ENCODE measurements at regions of chr9 and their contacts with region 1.

Region 1: DNA sequence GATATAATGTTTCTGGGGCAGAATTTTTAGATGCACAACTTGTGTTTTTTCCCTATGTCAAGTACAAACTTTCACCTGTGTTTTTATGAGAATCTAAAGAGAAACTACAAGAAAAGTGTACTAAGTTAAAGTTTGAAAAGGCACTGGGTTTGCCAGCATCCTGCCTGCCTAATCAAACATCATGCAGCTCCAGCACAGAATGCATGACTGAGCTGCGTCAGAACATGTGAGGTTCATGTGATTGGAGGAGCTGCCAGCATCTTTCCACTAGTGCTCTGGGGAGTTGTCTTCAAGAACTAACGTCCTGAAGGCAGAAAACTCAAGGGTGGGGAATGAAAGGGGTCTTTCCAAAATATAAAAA is 46.1 kb upstream of the RIC1 start:
- DNase-seq: peak; percentile 66
- H3K4me3 Mint-ChIP-seq: no peak overlapping the region
- H3K27ac Mint-ChIP-seq: peak overlapping the region; percentile 82
- H3K4me1 Mint-ChIP-seq: peaks cover 72% of the 10 kb centered on the region
- H3K27me3 Mint-ChIP-seq: no peaks in the 10 kb centered on the region

Region 2: GRCh38 chr9:5437254-5438216 is 145.3 kb before region 1 on chr9 and contains the start of gene PLGRKT:
- CTCF ChIA-PET with region 1: interaction called, 16 read pairs
- DNase-seq: peak; percentile 95
- H3K4me3 Mint-ChIP-seq: peak within 1 kb of the TSS; percentile 94
- H3K27ac Mint-ChIP-seq: peak within 1 kb of the TSS; percentile 97
- H3K4me1 Mint-ChIP-seq: peaks cover 38% of the 10 kb centered on the region
- H3K27me3 Mint-ChIP-seq: no peaks in the 10 kb centered on the region

Region 3: GRCh38 chr9:5450359-5451091 is 132.3 kb before region 1 on chr9 and contains the start of gene CD274:
- CTCF ChIA-PET with region 1: interaction called, 122 read pairs
- DNase-seq: peak; percentile 86
- H3K4me3 Mint-ChIP-seq: peak within 1 kb of the TSS; percentile 89
- H3K27ac Mint-ChIP-seq: peak within 1 kb of the TSS; percentile 90
- H3K4me1 Mint-ChIP-seq: peaks cover 81% of the 10 kb centered on the region
- H3K27me3 Mint-ChIP-seq: no peaks in the 10 kb centered on the region

Region 4: GRCh38 chr9:5593904-5594303 is 11.1 kb after region 1 on chr9:
- CTCF ChIA-PET with region 1: interaction called, 20 read pairs
- DNase-seq: no peak
- H3K4me3 Mint-ChIP-seq: no peak overlapping the region
- H3K27ac Mint-ChIP-seq: no peak overlapping the region
- H3K4me1 Mint-ChIP-seq: peaks cover 11% of the 10 kb centered on the region
- H3K27me3 Mint-ChIP-seq: no peaks in the 10 kb centered on the region